ENCODE measurements at regions of chr13 and their contacts with region 1.

Region 1: GRCh38 chr13:112606109-112607001 is 18.4 kb upstream of the TUBGCP3 start:
- DNase-seq: peak; percentile 98

Region 2: DNA sequence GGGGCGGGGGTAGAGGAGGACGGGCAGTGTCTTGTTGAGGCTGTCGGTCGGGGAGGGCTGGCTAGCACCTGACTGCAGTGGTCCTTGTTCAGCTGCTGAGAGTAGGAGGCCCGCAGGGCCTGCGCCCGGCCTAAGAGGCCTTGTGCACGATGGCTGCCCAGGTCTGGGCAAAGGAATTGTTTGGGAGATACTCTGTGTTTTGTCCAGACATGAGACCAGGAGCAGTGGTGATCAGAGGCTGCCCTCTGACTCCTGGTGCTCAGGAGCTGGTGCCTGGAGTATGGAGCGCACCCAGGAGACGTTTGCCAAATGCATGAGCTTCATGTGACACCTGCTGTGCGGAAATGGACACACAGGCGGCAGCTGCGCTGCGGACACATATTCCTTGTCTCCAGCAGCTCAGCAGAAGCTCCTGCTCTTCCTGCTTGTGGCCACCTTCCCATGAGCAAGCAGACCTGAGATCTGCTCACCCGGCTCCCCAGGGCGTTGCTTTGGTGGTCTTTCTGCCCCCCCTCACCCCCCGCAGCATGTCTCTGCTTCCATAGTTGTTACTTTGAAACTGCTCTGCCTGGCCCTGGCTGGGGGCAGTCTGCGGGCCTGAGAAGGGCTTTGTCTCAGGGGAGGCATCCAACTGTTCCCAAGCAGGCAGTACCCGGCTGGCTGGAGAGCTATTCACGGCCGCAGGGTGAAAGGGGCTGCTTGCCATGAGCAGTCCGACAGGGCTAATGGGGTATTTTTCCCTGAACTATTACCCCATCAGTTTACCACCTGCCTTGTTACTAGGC is 1122.0 kb before region 1 on chr13:
- intact Hi-C with region 1: loop called in 1 of 2 experiments (anchors 10 kb)
- DNase-seq: peak; percentile 56

Region 3: GRCh38 chr13:112083971-112084370 is 522.4 kb before region 1 on chr13:
- intact Hi-C with region 1: no loop called
- DNase-seq: no peak

Region 4: GRCh38 chr13:112575675-112576074 is 30.7 kb before region 1 on chr13:
- intact Hi-C with region 1: no loop called
- DNase-seq: no peak

Measured in posterior vena cava (tissue), 2 donors.